H1 (cell line): ENCODE measurements at regions of chr6 and their contacts with region 1.

Region 1: GRCh38 chr6:36360241-36361054 is 23.8 kb upstream of the BNIP5 start:
- DNase-seq: peak; percentile 7 to 82
- H3K4me3 ChIP-seq: no peak overlapping the region
- H3K27ac ChIP-seq: no peak overlapping the region
- H3K4me1 ChIP-seq: no peaks in the 10 kb centered on the region
- H3K27me3 ChIP-seq: peaks cover 0 to 1% (median 0%) of the 10 kb centered on the region in 4 experiments; a peak in 1 of 7 replicates
- CTCF ChIP-seq: peak; percentile 52 to 92 (median 88)
- EP300 ChIP-seq: no peak
- POLR2A ChIP-seq: no peak
- RAD21 ChIP-seq: peak; percentile 93 to 95

Region 2: DNA sequence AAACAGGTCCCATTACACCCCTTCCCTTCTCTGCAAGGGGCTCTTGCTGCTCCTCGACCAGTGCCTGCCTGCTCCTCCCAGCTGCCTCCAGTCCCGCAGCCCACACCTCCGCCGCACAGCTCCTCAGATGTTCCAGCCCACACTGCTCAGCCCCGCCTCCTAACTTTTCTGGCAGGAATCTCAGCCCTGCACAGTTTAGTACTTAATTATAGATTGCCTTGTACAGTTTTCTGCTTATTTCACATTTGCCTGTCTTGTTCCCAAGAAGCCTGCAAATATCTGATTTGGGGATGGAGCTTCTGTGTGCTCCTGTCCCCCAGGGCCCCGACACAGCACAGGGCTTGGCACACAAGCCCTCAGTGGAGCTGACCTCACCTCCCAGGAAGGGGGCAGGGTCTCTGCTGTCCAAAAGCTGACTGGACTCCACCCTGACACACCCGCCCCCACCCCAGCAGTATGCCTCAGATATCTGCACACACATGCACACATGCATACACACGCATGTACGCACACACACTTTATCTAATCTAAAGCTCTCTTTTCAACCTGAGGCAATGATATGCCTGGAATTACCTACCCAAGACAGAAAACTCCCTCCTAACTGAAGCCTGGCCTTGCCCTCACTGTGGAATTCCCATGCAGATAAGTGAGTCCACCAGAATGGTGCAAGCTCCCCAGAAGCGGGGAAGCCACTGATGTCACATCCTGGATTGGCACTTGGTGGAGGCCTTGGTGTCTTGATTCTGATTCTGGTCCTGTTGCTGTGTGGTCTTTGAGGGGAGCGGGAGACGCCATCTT is 91.8 kb before region 1 on chr6:
- CTCF ChIA-PET with region 1: interaction called, 10 read pairs
- POLR2A ChIA-PET with region 1: no interaction called
- DNase-seq: no peak
- H3K4me3 ChIP-seq: no peak overlapping the region
- H3K27ac ChIP-seq: no peak overlapping the region
- H3K4me1 ChIP-seq: peaks cover 0 to 5% (median 1%) of the 10 kb centered on the region in 4 experiments; a peak in 2 of 7 replicates
- H3K27me3 ChIP-seq: no peaks in the 10 kb centered on the region
- CTCF ChIP-seq: no peak
- EP300 ChIP-seq: no peak
- POLR2A ChIP-seq: no peak
- RAD21 ChIP-seq: no peak

Region 3: DNA sequence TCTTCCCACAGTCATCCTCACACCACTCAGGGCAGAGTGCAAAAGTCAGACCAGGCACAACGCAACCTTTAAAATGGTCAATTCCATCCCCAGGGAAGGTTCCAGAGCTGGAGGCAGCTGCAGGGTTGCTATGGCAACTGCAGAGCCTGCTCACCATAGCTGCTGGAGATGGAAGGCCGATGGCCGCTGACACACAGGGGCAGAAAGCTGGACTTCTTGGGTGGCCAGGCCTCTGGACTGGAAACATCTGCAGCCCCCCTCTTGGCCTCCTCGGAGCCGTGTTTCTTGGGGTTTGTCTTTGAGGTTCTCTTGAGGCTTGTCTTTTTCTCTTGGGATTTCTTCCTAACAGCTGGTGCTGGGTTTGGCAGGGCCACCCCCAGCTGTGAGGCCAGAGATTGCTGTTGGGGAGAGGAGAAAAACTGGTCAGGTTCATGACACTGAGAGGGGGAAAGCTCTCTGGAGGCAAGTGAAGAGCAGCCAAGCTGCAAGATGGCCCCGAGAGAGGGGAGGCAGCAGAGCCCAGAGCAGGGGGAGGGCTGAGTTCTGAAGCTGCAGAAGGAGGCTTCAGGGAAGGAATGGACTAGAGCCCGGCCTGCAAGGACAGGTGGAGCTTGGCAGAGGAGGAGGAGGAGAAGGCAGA is 34.0 kb before region 1 on chr6:
- CTCF ChIA-PET with region 1: interaction called, 11 read pairs
- POLR2A ChIA-PET with region 1: no interaction called
- DNase-seq: no peak
- H3K4me3 ChIP-seq: no peak overlapping the region
- H3K27ac ChIP-seq: no peak overlapping the region
- H3K4me1 ChIP-seq: peaks cover 0 to 16% (median 5%) of the 10 kb centered on the region in 4 experiments; a peak in 5 of 7 replicates
- H3K27me3 ChIP-seq: no peaks in the 10 kb centered on the region; a peak in 1 of 7 replicates
- CTCF ChIP-seq: no peak
- EP300 ChIP-seq: no peak
- POLR2A ChIP-seq: no peak
- RAD21 ChIP-seq: no peak

Region 4: GRCh38 chr6:36340618-36341454 is 19.6 kb before region 1 on chr6:
- CTCF ChIA-PET with region 1: interaction called, 68 read pairs
- POLR2A ChIA-PET with region 1: interaction called, 3 read pairs
- DNase-seq: peak in 1 of 2 experiments; percentile 87
- H3K4me3 ChIP-seq: peak overlapping the region; percentile 2 to 53 (median 43); a peak in 7 of 8 replicates
- H3K27ac ChIP-seq: no peak overlapping the region
- H3K4me1 ChIP-seq: peaks cover 0 to 3% (median under 1%) of the 10 kb centered on the region in 4 experiments; a peak in 4 of 7 replicates
- H3K27me3 ChIP-seq: peaks cover 0 to 9% (median 3%) of the 10 kb centered on the region in 4 experiments; a peak in 3 of 7 replicates
- CTCF ChIP-seq: peak; percentile 85 to 98 (median 92)
- EP300 ChIP-seq: no peak
- POLR2A ChIP-seq: no peak
- RAD21 ChIP-seq: peak; percentile 49 to 64

Region 5: DNA sequence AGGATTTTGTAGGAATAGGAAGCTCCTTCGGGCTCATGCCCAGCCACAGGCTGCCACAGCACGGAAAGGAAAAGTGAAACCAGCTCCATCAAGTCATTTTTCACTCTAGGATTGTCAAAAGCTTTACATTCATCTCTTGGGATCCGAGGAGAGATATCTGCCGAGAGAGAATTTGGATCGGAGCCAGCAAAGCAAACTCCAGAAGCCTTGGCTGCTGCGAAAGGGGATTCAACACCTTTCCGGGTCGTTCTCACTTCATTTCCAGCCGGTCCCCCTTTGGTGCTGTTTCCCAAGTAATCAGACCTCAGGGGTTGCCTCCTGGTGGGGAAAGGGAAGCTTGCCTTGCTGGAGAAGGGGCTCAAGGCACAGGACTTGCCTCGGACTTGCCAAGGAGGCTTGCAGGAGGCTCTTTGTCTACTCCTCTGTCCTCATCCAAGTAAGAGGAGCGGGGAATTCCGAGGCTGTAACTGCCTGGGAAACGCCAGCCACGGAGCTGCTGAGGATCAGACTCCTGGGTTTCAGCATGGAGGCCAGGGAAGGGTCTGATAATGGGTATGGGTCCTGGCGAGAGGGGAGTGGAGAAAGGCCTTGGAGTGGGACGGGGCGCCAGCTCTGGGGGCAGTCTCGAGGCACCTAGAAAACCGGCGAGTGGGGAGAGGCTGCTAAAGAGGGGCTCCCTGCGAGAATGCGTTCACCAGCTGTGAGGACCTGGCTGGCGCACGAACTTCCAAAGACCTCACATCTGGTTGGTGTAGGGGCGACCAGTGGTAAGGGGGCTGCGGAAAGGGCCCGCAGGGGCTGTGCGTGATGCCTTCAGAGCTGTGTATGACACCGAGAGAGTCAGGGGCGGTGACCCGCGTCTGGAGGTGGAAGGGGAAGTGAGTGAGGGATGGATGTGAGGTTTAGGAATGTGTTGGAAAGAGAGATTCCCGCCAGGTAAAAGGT is 26.3 kb after region 1 on chr6:
- CTCF ChIA-PET with region 1: interaction called, 10 read pairs
- POLR2A ChIA-PET with region 1: interaction called, 6 read pairs
- DNase-seq: peak; percentile 21 to 65
- H3K4me3 ChIP-seq: peak overlapping the region; percentile 43 to 68 (median 64)
- H3K27ac ChIP-seq: no peak overlapping the region
- H3K4me1 ChIP-seq: peaks cover 0 to 11% (median under 1%) of the 10 kb centered on the region in 4 experiments; a peak in 4 of 7 replicates
- H3K27me3 ChIP-seq: peaks cover 11 to 40% (median 36%) of the 10 kb centered on the region in 4 experiments
- CTCF ChIP-seq: peak in 1 of 3 experiments; percentile 1; a peak in 1 of 4 replicates
- EP300 ChIP-seq: no peak
- POLR2A ChIP-seq: no peak
- RAD21 ChIP-seq: no peak; a peak in 1 of 4 replicates

Region 6: GRCh38 chr6:36504982-36505381 is 144.5 kb after region 1 on chr6:
- CTCF ChIA-PET with region 1: no interaction called
- POLR2A ChIA-PET with region 1: no interaction called
- DNase-seq: no peak
- H3K4me3 ChIP-seq: no peak overlapping the region
- H3K27ac ChIP-seq: no peak overlapping the region
- H3K4me1 ChIP-seq: no peaks in the 10 kb centered on the region
- H3K27me3 ChIP-seq: no peaks in the 10 kb centered on the region
- CTCF ChIP-seq: no peak
- EP300 ChIP-seq: no peak
- POLR2A ChIP-seq: no peak
- RAD21 ChIP-seq: no peak